CD8-positive, alpha-beta T cell (primary cell): ENCODE measurements at regions of chr9 and their contacts with region 1.

Region 1: GRCh38 chr9:34989003-34989945 is at the start of gene DNAJB5:
- DNase-seq: peak; percentile 94 to 99 (median 96)
- ATAC-seq: peak; percentile 89
- H3K4me3 ChIP-seq: peak within 1 kb of the TSS; percentile 88 to 95
- H3K4me3 Mint-ChIP-seq: peak within 1 kb of the TSS; percentile 93
- H3K27ac ChIP-seq: peak within 1 kb of the TSS; percentile 42 to 77
- H3K27ac Mint-ChIP-seq: peak within 1 kb of the TSS; percentile 76
- H3K4me1 ChIP-seq: peaks cover 42% of the 10 kb centered on the region
- H3K4me1 Mint-ChIP-seq: peaks cover 46% of the 10 kb centered on the region
- H3K27me3 ChIP-seq: no peaks in the 10 kb centered on the region
- H3K27me3 Mint-ChIP-seq: no peaks in the 10 kb centered on the region
- CTCF ChIP-seq: no peak
- total RNA-seq, gene DNAJB5: 2.1 to 2.2 TPM

Region 2: GRCh38 chr9:34710023-34710422 is 279.3 kb before region 1 on chr9 and contains the start of gene CCL21:
- CTCF ChIA-PET with region 1: no interaction called
- POLR2A ChIA-PET with region 1: no interaction called
- intact Hi-C with region 1: no loop called
- DNase-seq: no peak
- ATAC-seq: no peak
- H3K4me3 ChIP-seq: no peak within 1 kb of the TSS
- H3K4me3 Mint-ChIP-seq: no peak within 1 kb of the TSS
- H3K27ac ChIP-seq: no peak within 1 kb of the TSS
- H3K27ac Mint-ChIP-seq: no peak within 1 kb of the TSS
- H3K4me1 ChIP-seq: no peaks in the 10 kb centered on the region
- H3K4me1 Mint-ChIP-seq: no peaks in the 10 kb centered on the region
- H3K27me3 ChIP-seq: no peaks in the 10 kb centered on the region
- H3K27me3 Mint-ChIP-seq: peaks cover 11% of the 10 kb centered on the region
- CTCF ChIP-seq: no peak
- total RNA-seq, gene CCL21: not detected

Region 3: DNA sequence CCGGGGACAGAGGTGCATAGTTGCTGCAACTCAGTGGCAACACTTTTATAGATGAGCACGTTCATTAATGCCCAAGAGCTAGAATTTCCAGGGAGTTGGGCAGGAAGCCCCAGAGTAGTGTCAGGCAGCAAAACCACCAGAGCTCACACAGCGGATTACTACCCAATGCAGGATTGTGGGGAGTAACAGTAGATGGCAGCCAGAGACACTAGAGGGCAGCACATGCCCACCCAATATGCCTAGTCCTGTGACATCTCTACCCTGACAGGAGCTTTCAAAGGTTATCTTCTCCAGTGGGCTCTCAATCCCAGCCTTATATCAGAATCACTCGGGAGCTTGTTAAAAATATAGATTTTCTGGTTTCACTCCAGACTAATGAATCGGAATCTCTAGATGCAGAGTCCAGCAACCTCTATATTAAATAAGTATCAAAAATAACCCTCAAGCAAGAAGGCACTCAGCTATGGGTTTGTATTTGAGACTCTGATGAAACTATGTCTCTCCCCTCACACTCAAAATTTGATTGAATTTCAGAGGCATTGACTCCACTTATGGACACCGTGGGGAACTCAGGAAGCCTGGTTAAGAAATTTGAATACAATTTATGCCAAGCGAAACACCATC is 89.6 kb before region 1 on chr9:
- CTCF ChIA-PET with region 1: interaction called, 60 read pairs
- POLR2A ChIA-PET with region 1: interaction called, 10 read pairs
- intact Hi-C with region 1: loop called (anchors 1 kb)
- DNase-seq: peak; percentile 64 to 87 (median 80)
- ATAC-seq: peak; percentile 99
- H3K4me3 ChIP-seq: no peak overlapping the region
- H3K4me3 Mint-ChIP-seq: no peak overlapping the region
- H3K27ac ChIP-seq: no peak overlapping the region
- H3K27ac Mint-ChIP-seq: no peak overlapping the region
- H3K4me1 ChIP-seq: no peaks in the 10 kb centered on the region
- H3K4me1 Mint-ChIP-seq: no peaks in the 10 kb centered on the region
- H3K27me3 ChIP-seq: no peaks in the 10 kb centered on the region
- H3K27me3 Mint-ChIP-seq: peaks cover 31% of the 10 kb centered on the region
- CTCF ChIP-seq: peak; percentile 81

Region 4: DNA sequence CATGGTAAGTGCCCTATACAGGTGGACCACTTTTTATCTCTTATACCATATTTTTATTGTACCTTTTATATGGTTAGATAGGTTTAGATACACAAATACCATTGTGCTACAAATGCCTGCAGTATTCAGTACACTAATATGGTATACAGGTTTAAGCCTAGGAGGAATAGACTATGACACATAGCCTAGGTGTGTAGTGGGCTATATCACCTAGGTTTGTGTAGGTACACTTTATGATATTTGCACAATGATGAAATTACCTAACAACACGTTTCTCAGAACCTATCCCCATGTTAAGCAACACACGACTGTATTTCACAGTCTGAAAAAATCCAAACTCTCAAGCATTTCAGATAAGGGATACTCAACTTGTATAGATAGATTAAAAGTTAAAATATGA is 40.8 kb before region 1 on chr9:
- CTCF ChIA-PET with region 1: no interaction called
- POLR2A ChIA-PET with region 1: no interaction called
- intact Hi-C with region 1: no loop called
- DNase-seq: no peak
- ATAC-seq: no peak
- H3K4me3 ChIP-seq: no peak overlapping the region
- H3K4me3 Mint-ChIP-seq: no peak overlapping the region
- H3K27ac ChIP-seq: no peak overlapping the region
- H3K27ac Mint-ChIP-seq: no peak overlapping the region
- H3K4me1 ChIP-seq: no peaks in the 10 kb centered on the region
- H3K4me1 Mint-ChIP-seq: no peaks in the 10 kb centered on the region
- H3K27me3 ChIP-seq: no peaks in the 10 kb centered on the region
- H3K27me3 Mint-ChIP-seq: peaks cover 24% of the 10 kb centered on the region
- CTCF ChIP-seq: no peak

Region 5: GRCh38 chr9:35051069-35051967 is 62.0 kb after region 1 on chr9:
- CTCF ChIA-PET with region 1: interaction called, 10 read pairs
- POLR2A ChIA-PET with region 1: interaction called, 3 read pairs
- intact Hi-C with region 1: no loop called
- DNase-seq: peak in 8 of 9 experiments; percentile 19 to 65 (median 48)
- ATAC-seq: peak; percentile 84
- H3K4me3 ChIP-seq: no peak overlapping the region
- H3K4me3 Mint-ChIP-seq: no peak overlapping the region
- H3K27ac ChIP-seq: no peak overlapping the region
- H3K27ac Mint-ChIP-seq: peak overlapping the region; percentile 15
- H3K4me1 ChIP-seq: no peaks in the 10 kb centered on the region
- H3K4me1 Mint-ChIP-seq: peaks cover 4% of the 10 kb centered on the region
- H3K27me3 ChIP-seq: no peaks in the 10 kb centered on the region
- H3K27me3 Mint-ChIP-seq: no peaks in the 10 kb centered on the region
- CTCF ChIP-seq: peak; percentile 78

Region 6: DNA sequence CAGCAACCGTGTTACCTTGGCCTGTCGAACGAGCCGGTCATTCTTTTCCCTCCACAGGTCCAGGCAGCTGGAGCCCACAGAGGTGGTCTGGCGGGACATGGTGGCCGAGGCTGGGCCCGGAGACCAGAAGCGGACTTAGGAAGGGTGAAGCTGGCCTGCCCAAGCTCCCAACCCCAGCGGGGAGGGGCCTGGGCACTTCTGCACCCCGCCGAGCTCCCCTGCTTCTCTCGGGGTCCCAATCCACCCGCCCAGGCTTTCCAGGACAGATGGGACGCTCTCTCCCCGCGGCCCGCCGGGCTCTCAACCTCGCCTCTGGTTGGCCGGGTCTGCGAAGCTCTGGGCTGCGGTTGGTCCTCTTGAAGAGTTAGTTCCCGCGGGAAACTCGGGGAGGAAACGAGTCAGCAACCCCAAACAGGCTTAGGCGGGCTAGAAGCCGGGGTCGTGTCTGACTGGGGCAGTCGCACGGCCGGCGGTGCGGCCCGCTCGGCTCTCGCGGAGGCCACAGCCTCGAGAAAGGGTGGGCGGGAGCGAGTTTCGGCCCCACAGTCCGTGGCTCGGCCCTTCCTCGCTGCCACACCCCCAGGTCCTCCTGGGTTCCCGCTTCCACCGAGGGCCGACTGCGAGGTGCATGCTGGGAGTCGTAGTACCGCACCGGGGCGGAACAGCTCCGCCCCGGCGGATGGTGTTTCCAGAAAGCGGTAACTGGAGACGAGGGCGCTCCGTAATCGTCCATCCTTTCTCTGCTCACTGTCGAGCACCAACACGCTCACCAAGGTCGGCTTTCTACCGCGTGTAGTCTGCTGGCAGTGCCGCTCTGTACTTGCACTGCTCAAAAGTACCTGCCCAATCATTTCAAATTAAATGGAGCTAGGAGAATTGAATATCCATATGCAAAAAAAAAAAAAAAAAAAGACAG is 90.4 kb after region 1 on chr9 and contains the start of gene FANCG:
- CTCF ChIA-PET with region 1: no interaction called
- POLR2A ChIA-PET with region 1: interaction called, 3 read pairs
- intact Hi-C with region 1: loop called in 1 of 2 experiments (anchors 1 kb)
- DNase-seq: peak; percentile 30 to 88 (median 73)
- ATAC-seq: peak; percentile 92
- H3K4me3 ChIP-seq: peak within 1 kb of the TSS; percentile 65 to 81
- H3K4me3 Mint-ChIP-seq: peak within 1 kb of the TSS; percentile 92
- H3K27ac ChIP-seq: peak within 1 kb of the TSS; percentile 42 to 49
- H3K27ac Mint-ChIP-seq: peak within 1 kb of the TSS; percentile 84
- H3K4me1 ChIP-seq: peaks cover 15% of the 10 kb centered on the region
- H3K4me1 Mint-ChIP-seq: peaks cover 21% of the 10 kb centered on the region
- H3K27me3 ChIP-seq: no peaks in the 10 kb centered on the region
- H3K27me3 Mint-ChIP-seq: no peaks in the 10 kb centered on the region
- CTCF ChIP-seq: no peak
- total RNA-seq, gene FANCG: 15.2 to 19.4 TPM

Region 7: GRCh38 chr9:35102926-35103659 is 113.8 kb after region 1 on chr9 and contains the start of gene STOML2:
- CTCF ChIA-PET with region 1: no interaction called
- POLR2A ChIA-PET with region 1: interaction called, 4 read pairs
- intact Hi-C with region 1: loop called in 1 of 2 experiments (anchors 2 kb)
- DNase-seq: peak; percentile 83 to 97 (median 93)
- ATAC-seq: peak; percentile 96
- H3K4me3 ChIP-seq: peak within 1 kb of the TSS; percentile 78 to 95
- H3K4me3 Mint-ChIP-seq: peak within 1 kb of the TSS; percentile 89
- H3K27ac ChIP-seq: peak within 1 kb of the TSS; percentile 79 to 92
- H3K27ac Mint-ChIP-seq: peak within 1 kb of the TSS; percentile 90
- H3K4me1 ChIP-seq: peaks cover 14% of the 10 kb centered on the region
- H3K4me1 Mint-ChIP-seq: peaks cover 27% of the 10 kb centered on the region
- H3K27me3 ChIP-seq: no peaks in the 10 kb centered on the region
- H3K27me3 Mint-ChIP-seq: no peaks in the 10 kb centered on the region
- CTCF ChIP-seq: no peak
- total RNA-seq, gene STOML2: 30.5 to 31.3 TPM

Region 8: GRCh38 chr9:35481347-35481975 is 492.2 kb after region 1 on chr9:
- CTCF ChIA-PET with region 1: no interaction called
- POLR2A ChIA-PET with region 1: no interaction called
- intact Hi-C with region 1: loop called in 1 of 2 experiments (anchors 5 kb)
- DNase-seq: peak in 2 of 9 experiments; percentile 13 to 26
- ATAC-seq: peak; percentile 40
- H3K4me3 ChIP-seq: no peak overlapping the region
- H3K4me3 Mint-ChIP-seq: no peak overlapping the region
- H3K27ac ChIP-seq: no peak overlapping the region
- H3K27ac Mint-ChIP-seq: no peak overlapping the region
- H3K4me1 ChIP-seq: no peaks in the 10 kb centered on the region
- H3K4me1 Mint-ChIP-seq: no peaks in the 10 kb centered on the region
- H3K27me3 ChIP-seq: peaks cover 2 to 6% of the 10 kb centered on the region in 2 experiments
- H3K27me3 Mint-ChIP-seq: peaks cover 5% of the 10 kb centered on the region
- CTCF ChIP-seq: peak; percentile 22

Region 9: DNA sequence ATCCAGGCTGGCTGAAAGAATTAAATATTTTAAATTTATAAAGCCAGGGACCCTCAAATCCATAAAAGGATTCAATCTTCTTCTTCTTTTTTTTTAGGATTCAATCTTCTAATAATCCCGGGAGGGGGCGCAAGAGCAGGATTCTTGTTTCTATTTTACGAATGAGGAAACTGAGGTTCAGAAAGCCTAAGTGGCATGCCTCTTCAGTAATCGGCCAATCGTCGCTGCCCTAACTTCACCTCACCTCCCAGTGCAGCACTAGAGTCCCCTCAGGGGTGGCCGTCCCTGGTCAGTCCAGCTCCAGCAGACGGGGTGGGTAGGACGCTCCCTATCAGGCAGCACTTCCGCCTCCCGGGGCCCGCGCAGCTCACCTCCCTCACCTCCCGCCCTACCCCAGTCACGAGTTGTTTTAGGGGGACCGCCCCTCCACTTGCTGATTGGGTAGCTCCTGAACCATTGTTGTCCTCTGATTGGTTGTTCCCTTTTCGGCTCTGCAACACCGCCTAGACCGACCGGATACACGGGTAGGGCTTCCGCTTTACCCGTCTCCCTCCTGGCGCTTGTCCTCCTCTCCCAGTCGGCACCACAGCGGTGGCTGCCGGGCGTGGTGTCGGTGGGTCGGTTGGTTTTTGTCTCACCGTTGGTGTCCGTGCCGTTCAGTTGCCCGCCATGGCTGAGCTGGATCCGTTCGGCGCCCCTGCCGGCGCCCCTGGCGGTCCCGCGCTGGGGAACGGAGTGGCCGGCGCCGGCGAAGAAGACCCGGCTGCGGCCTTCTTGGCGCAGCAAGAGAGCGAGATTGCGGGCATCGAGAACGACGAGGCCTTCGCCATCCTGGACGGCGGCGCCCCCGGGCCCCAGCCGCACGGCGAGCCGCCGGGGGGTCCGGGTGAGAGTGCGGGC is 1201.4 kb after region 1 on chr9 and contains the start of gene CLTA:
- CTCF ChIA-PET with region 1: no interaction called
- POLR2A ChIA-PET with region 1: no interaction called
- intact Hi-C with region 1: loop called in 1 of 2 experiments (anchors 5 kb)
- DNase-seq: peak; percentile 84 to 99 (median 93)
- ATAC-seq: peak; percentile 97
- H3K4me3 ChIP-seq: peak within 1 kb of the TSS; percentile 63 to 95
- H3K4me3 Mint-ChIP-seq: peak within 1 kb of the TSS; percentile 94
- H3K27ac ChIP-seq: peak within 1 kb of the TSS; percentile 74 to 80
- H3K27ac Mint-ChIP-seq: peak within 1 kb of the TSS; percentile 91
- H3K4me1 ChIP-seq: peaks cover 37% of the 10 kb centered on the region
- H3K4me1 Mint-ChIP-seq: peaks cover 50% of the 10 kb centered on the region
- H3K27me3 ChIP-seq: no peaks in the 10 kb centered on the region
- H3K27me3 Mint-ChIP-seq: no peaks in the 10 kb centered on the region
- CTCF ChIP-seq: peak; percentile 55
- total RNA-seq, gene CLTA: 39.1 to 39.6 TPM